ENCODE measurements at regions of chr6 and their contacts with region 1.

Region 1: DNA sequence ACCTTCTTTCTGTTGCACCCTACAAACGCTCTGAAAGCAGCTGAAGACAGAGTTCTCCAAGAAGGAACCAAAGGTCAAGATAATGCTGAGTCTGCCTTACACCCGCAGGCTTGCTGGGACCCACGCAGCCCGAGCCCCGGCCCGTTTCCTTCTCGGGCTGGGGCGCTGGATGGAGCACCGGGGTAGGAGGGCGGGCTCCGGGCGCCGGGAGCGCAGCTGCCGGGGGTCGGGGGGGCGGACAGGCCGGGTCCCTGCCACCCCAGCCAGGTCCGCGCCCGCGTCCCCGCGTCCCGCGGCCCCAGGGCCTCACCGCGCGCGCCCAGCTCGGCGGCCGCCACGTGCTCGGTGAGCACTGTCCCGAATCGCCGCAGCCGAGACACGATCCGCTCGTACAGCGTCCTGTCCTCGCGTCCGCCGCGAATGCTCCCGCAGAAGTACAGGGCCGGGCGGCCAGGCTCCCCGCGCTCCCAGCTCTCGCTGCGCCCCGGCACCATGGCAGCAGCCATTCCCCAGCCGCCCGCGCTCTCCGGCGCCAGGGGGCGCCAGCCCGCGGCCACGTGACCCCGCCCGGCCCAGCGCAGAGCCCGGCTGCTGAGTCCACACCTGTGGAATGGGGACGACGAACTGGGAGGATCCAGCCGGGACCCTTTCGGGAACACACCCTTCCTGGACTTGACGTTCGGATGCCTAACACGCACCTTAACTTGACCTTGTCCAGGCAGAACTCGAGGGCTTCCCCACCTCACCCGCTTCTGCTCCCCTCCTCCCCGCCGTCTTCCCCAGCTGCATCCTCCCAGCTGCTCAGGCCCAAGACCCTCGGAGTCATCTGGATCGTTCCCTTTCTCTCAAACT is at the start of gene DNPH1:
- DNase-seq: peak; percentile 79
- H3K4me3 Mint-ChIP-seq: peak within 1 kb of the TSS; percentile 90
- H3K27ac Mint-ChIP-seq: peak within 1 kb of the TSS; percentile 89
- H3K4me1 Mint-ChIP-seq: peaks cover 41% of the 10 kb centered on the region
- H3K27me3 Mint-ChIP-seq: no peaks in the 10 kb centered on the region
- total RNA-seq, gene DNPH1: 59.7 to 59.8 TPM

Region 2: DNA sequence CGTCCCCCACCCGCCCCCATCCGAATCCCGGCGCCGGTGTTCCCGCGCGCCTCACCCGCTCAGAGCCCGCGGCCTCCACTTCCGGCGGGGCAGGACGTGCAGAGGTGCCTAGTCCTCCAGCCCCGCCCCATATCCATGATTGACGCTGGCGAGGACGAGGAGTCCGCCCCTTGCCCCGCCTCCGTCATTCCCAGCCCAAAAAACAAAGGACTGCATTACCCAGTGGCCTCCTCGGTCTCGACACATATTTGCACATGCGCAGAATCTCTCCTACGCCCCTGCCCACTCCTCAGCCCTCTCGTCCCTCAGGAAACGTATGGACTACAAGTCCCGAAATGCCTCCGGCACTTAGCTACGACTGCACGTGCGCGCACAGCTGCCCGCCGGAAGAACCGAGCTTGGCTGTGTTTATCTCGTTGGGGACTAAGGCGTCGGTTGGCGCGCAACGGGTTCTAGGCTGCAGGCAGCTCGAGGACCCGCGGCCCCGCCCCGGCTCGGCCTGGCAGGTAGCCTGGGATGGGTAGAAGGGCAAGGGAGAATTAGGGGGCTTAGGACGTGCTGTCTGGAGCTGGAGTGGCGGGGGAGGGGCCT is 215.2 kb before region 1 on chr6 and contains the starts of genes KLHDC3 and MEA1:
- CTCF ChIA-PET with region 1: no interaction called
- intact Hi-C with region 1: loop called (anchors 2 kb)
- DNase-seq: peak; percentile 100
- H3K4me3 Mint-ChIP-seq: peak within 1 kb of the TSS; percentile 95
- H3K27ac Mint-ChIP-seq: peak within 1 kb of the TSS; percentile 88
- H3K4me1 Mint-ChIP-seq: peaks cover 53% of the 10 kb centered on the region
- H3K27me3 Mint-ChIP-seq: no peaks in the 10 kb centered on the region
- total RNA-seq, gene KLHDC3: 58.6 to 58.9 TPM
- total RNA-seq, gene MEA1: 80.6 to 85.1 TPM

Region 3: GRCh38 chr6:43181942-43182860 is 47.0 kb before region 1 on chr6 and contains the start of gene CUL9:
- CTCF ChIA-PET with region 1: interaction called, 4 read pairs
- intact Hi-C with region 1: loop called (anchors 2 kb)
- DNase-seq: peak; percentile 85
- H3K4me3 Mint-ChIP-seq: peak within 1 kb of the TSS; percentile 95
- H3K27ac Mint-ChIP-seq: peak within 1 kb of the TSS; percentile 84
- H3K4me1 Mint-ChIP-seq: peaks cover 47% of the 10 kb centered on the region
- H3K27me3 Mint-ChIP-seq: no peaks in the 10 kb centered on the region
- total RNA-seq, gene CUL9: 43.1 to 49.3 TPM

Region 4: GRCh38 chr6:43247113-43247999 is 18.2 kb after region 1 on chr6:
- CTCF ChIA-PET with region 1: interaction called, 5 read pairs
- intact Hi-C with region 1: loop called (anchors 1 kb)
- DNase-seq: peak; percentile 87
- H3K4me3 Mint-ChIP-seq: peak overlapping the region; percentile 73
- H3K27ac Mint-ChIP-seq: peak overlapping the region; percentile 76
- H3K4me1 Mint-ChIP-seq: peaks cover 21% of the 10 kb centered on the region
- H3K27me3 Mint-ChIP-seq: peaks cover 14% of the 10 kb centered on the region

Region 5: DNA sequence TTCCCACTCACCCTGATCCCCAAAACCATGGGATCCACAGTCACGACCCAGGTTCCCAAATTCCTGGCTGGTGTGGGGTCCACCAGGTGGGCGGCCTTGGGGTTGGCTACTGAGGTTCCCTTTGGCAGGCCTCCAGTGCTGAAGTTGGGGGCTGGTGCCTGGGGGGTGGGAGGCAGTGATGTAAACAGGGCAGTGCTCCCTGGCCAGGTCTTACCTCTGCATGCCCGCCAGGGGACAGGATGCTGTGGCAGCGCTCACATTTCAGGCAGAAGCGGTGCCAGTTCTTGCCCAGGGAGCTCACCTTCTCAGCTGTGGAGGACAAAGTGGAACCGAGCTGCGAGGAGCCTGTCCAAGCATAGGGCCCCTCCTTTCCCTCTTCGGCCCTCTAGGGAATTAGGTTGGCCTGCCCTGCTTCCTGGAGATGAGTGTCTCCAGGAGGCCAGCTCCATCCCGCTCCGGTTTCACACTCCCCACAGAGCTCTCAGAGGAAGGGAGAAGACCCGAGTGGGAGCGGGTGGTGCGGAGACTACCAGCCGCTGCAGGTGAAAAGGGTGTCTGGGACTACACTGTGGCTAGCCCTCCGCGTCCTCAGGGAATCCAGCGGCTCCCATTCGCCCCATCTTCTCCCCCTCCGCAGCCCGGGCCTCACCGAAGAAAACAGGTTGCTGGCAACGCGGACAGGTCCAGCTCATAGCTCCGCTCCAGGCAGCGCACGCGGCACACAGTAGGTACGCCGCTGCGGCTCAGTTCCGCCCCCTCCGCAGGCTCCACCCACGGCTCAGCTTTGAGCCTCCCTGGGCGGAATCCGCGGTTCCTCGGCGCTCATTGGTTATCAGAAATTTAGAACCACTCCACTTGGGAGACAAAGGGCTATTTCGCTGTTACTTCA is 79.2 kb after region 1 on chr6 and contains the start of gene CRIP3:
- CTCF ChIA-PET with region 1: interaction called, 14 read pairs
- intact Hi-C with region 1: no loop called
- DNase-seq: peak; percentile 67
- H3K4me3 Mint-ChIP-seq: peak within 1 kb of the TSS; percentile 82
- H3K27ac Mint-ChIP-seq: no peak within 1 kb of the TSS
- H3K4me1 Mint-ChIP-seq: peaks cover 6% of the 10 kb centered on the region
- H3K27me3 Mint-ChIP-seq: peaks cover 2% of the 10 kb centered on the region
- total RNA-seq, gene CRIP3: 2.9 to 3.1 TPM

Measured in activated naive CD4-positive, alpha-beta T cell treated with anti-CD3 and anti-CD28 coated beads for 36 hours (primary cell).